Psoas muscle (tissue), 8 donors: ENCODE measurements at regions of chr6 and their contacts with region 1.

Region 1: DNA sequence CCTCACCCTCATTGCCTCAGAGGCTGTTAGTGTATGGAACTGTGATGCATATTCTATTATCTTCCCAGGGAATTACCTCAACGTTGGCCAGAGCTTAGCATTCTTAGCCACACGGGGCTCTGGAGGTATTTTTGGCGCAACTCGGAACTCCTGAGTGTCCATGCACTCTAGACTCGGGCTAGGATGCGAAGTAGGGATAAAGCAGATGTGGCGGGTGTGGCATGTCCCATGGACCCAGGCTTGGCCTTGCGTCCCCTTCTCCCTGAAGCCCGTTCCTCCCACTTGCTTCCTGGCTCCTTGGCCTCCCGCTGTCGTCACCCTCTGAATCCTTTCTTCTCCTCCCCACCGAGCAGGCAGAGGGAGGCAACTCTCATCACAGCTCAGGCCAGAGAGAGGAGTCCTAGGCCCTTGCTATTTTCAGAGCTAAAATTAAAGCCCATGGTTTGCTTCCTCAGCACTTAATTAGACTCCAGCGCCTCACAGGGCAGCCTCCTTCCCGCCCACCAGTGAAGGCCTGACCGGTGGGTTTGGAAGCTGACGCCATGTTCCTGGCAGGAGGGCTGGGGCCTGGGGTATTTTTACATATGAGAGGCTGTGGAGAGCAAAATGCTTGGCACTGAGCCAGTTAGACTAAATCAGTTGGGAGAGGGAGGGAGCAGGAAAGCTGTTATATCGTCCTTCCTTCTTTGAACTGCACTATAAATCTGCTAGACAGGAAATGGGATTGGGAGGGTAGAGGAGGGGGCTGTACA is 138.7 kb downstream of the FOXO3 start:
- DNase-seq: peak in 1 of 2 donors; percentile 66
- ATAC-seq: peak in 2 of 4 donors; percentile 21
- H3K4me3 ChIP-seq: no peak overlapping the region
- H3K27ac ChIP-seq: no peak overlapping the region
- H3K4me1 ChIP-seq: no peaks in the 10 kb centered on the region
- H3K27me3 ChIP-seq: no peaks in the 10 kb centered on the region
- CTCF ChIP-seq: no peak

Region 2: DNA sequence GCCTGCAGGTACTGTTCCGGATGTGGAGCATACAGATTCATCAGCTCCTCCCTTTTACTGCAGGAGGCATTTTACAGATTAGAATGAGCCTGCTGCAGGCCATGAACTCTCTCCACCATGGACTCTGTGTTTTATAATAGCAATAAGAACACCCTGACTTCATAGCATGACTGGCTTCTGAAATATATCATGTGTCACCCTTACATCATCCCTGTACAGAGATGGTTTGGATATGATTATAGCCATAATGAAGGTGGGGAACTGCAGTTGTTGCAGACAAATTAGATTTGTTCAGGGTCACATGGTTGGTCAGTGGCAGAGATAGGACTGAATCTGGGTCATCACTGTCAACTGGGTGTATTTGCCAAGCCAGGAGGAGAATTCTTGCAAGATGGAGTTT is 38.0 kb before region 1 on chr6:
- intact Hi-C with region 1: no loop called
- DNase-seq: no peak
- ATAC-seq: peak; percentile 87 to 91 (median 88)
- H3K4me3 ChIP-seq: no peak overlapping the region
- H3K27ac ChIP-seq: peak overlapping the region; percentile 84
- H3K4me1 ChIP-seq: peaks cover 77% of the 10 kb centered on the region
- H3K27me3 ChIP-seq: no peaks in the 10 kb centered on the region
- CTCF ChIP-seq: no peak

Region 3: GRCh38 chr6:108760126-108761050 is 60.9 kb after region 1 on chr6:
- intact Hi-C with region 1: loop called (anchors 5 kb)
- DNase-seq: peak in 1 of 2 donors; percentile 73
- ATAC-seq: peak; percentile 54 to 92 (median 70)
- H3K4me3 ChIP-seq: no peak overlapping the region
- H3K27ac ChIP-seq: peak overlapping the region; percentile 55
- H3K4me1 ChIP-seq: peaks cover 32% of the 10 kb centered on the region
- H3K27me3 ChIP-seq: no peaks in the 10 kb centered on the region
- CTCF ChIP-seq: no peak

Region 4: DNA sequence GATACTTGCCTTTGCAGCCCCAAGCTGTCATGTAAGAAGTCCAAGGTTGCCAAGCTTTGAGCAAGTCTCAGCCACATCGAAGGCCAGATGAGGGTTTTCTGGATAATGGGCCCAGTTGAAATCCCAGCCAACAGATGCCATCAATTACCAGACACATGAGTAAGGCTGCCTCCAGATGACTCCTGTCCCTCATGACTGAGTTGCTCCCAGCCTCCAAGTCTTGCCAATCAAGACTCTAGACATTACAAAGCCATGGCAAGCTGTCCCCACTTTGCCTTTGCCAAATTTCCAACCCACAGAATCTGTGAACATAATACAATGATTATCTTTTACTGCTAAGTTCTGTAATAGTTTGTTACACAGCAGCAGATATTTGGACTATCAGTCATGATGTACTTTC is 72.0 kb after region 1 on chr6:
- intact Hi-C with region 1: no loop called
- DNase-seq: no peak
- ATAC-seq: peak; percentile 95 to 98 (median 96)
- H3K4me3 ChIP-seq: no peak overlapping the region
- H3K27ac ChIP-seq: peak overlapping the region; percentile 66
- H3K4me1 ChIP-seq: peaks cover 13% of the 10 kb centered on the region
- H3K27me3 ChIP-seq: no peaks in the 10 kb centered on the region
- CTCF ChIP-seq: no peak